Activated T-helper 2 cell treated with anti-CD3 and anti-CD28 coated beads, Interferon-gamma antibody, Interleukin-2, Interleukin-4, amounts not matched to agents 10 μg/mL and 5 μg/mL and 100 μg/mL, durations not matched to agents 14 hours and 24 hours and 36 hours (primary cell): ENCODE measurements at regions of chr16 and their contacts with region 1.

Region 1: DNA sequence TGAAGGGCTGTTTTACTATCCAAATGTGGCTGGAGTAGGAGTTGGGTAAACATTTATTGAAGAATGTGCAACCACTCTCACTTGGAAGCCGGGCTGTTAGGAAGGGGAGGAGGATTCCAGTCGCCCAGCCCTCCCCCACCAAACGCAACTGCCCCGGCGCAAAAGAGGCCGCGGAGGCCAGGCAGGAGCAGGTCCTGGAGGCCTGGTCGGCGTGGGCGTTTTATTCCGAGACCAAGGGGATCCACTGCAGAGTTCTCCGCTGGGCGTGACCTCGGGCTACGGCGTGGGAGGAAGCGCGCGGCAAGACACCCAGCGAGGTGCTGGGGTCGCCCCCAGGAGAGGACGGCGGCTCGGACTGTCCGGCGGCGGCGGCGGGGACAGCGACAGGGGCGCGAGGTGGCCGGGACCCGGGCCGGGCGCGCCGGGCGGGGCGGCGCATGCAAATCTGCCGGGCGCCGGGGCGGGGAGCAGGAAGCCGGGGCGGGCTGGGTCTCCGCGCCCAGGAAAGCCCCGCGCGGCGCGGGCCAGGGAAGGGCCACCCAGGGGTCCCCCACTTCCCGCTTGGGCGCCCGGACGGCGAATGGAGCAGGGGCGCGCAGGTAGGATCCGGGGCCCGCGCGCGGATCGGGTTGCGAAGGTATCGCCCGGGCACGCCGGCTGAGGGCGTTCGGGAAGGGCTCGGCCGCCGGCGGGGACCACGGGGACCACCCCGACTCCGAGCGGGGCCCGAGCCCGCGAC is at the start of gene IL4R:
- DNase-seq: peak; percentile 67
- H3K4me3 Mint-ChIP-seq: peak within 1 kb of the TSS; percentile 100
- H3K27ac Mint-ChIP-seq: peak within 1 kb of the TSS; percentile 98
- H3K4me1 Mint-ChIP-seq: peaks cover 43% of the 10 kb centered on the region
- H3K27me3 Mint-ChIP-seq: no peaks in the 10 kb centered on the region
- total RNA-seq, gene IL4R: 434 and 437 TPM in 2 replicates

Region 2: DNA sequence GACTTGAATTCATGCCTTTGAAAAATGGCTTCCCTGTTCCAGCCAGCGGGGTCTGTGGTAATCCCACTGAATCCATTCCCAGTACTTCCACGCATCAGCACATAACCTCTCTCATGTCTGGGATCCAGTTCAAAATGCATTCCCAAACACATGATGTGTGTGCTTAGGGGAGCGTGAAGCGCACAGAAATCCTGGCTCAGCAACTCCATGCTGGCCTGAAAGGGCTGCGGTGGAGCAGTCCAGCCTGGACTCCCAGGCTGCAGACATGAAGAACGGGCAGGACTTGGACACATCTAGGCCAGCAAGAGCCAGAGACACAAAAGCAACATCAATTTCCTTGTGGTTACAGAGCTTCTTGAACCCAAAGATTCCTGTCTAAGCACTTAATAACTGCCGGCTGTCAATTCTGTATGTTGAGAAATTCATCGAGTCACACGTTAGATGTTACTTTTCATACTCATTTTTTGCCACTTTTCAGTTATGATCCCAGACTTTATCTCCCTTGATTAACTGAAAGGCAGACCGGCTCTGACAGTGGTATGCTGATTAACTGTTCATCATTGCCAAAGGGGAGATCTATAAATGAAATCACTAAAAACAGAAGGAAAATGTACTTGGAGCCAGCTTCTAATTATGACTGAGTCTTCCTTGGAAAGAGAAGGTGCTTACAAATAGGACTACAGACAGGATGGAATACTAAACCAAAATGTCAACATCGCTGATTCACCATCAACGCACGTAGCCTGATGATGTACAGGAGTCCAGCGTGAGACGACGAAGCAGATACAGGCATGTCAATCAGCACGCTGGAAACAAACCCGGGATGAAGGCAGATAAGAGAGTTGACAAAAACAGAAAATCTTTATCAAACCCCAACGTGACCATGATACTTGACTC is 68.1 kb before region 1 on chr16:
- intact Hi-C with region 1: loop called (anchors 2 kb)
- DNase-seq: peak; percentile 69
- H3K4me3 Mint-ChIP-seq: peak overlapping the region; percentile 3
- H3K27ac Mint-ChIP-seq: peak overlapping the region; percentile 91
- H3K4me1 Mint-ChIP-seq: peaks cover 90% of the 10 kb centered on the region
- H3K27me3 Mint-ChIP-seq: no peaks in the 10 kb centered on the region